ENCODE measurements at regions of chr4 and their contacts with region 1.

Region 1: DNA sequence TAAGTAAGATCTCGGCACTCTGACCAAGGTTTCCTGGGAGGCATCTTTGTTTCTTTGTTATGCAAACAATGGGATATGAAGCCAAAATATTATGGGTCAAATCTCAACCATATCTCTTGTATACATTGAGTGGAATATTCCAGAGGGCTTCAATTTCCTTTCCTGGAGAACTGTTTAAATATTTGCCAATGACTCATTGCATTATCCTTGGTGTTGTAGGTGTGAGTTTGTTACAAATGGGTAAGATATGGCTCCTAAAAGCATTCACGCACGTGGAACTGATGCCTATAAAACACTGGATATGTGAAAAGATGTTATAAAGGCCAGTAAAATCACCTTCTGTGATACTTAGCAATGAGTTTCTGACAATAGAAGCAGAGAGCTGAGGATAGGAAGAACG is 150.5 kb upstream of the WDR1 start:
- DNase-seq: no peak
- ATAC-seq: no peak
- H3K4me3 ChIP-seq: no peak overlapping the region
- H3K27ac ChIP-seq: no peak overlapping the region
- H3K4me1 ChIP-seq: no peaks in the 10 kb centered on the region
- H3K27me3 ChIP-seq: no peaks in the 10 kb centered on the region
- CTCF ChIP-seq: no peak

Region 2: GRCh38 chr4:10045481-10045880 is 221.6 kb before region 1 on chr4:
- intact Hi-C with region 1: no loop called
- DNase-seq: no peak
- ATAC-seq: no peak
- H3K4me3 ChIP-seq: no peak overlapping the region
- H3K27ac ChIP-seq: peak overlapping the region in 1 of 10 donors; percentile 50
- H3K4me1 ChIP-seq: peaks cover 0 to 22% (median 0%) of the 10 kb centered on the region in 9 donors
- H3K27me3 ChIP-seq: no peaks in the 10 kb centered on the region
- CTCF ChIP-seq: no peak

Region 3: DNA sequence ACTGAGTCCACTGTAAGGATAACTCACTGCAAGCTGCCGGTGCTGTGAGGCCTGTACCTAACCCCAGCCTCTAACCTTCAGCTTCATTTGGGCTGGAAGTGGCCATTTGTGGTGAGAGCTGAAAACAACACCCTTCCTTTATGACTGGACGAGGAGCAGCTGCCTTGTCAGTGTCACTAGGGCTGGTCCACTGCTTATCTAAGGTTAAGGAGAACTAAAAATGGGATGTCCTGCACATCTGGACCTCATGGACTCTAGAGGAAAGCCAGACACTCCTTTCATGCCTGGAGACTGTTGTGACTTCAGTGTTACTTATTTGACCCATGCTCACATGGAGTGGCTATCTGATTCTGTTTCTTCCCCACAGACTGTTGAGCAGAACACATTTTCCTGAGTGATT is 50.3 kb after region 1 on chr4:
- intact Hi-C with region 1: loop called in 1 of 10 experiments (anchors 5 kb)
- DNase-seq: no peak
- ATAC-seq: no peak
- H3K4me3 ChIP-seq: no peak overlapping the region
- H3K27ac ChIP-seq: no peak overlapping the region
- H3K4me1 ChIP-seq: no peaks in the 10 kb centered on the region
- H3K27me3 ChIP-seq: peaks cover 0 to 2% (median 0%) of the 10 kb centered on the region in 7 donors
- CTCF ChIP-seq: no peak